ENCODE measurements at regions of chr3 and their contacts with region 1.

Region 1: DNA sequence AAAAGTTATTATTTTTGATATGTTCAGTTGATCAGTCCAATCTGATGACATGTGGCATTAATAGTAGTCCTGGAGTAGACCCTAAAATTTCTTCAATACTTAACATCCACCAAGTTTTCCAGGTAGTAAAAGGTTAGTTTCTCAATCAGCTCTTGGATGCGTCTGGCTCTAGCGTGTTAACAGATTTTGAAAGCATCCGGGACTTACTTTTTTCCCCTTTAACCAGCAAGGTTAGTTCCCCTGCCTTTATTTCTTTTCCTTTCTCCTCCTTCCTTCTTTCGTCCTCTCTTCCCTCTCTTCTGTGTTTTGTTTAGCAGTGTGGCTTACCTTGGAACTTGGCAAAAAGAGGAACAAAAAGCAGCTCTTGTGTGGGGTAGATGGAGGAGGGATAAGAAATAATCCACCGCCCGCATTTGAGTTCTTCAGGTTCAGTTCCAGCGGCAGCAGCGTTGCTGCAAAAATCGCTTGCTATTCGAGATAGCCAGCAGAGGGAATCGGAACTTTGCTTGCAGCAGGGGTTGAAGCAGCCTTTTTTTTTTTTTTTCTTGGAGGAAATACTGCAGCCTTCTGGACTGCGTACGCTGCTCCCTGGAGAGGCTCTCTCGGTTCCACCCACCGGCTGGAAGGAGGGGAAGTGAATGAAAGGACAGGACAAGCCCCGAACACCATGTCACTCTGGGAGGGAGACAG is at the start of gene RBMS3:
- DNase-seq: peak; percentile 91
- ATAC-seq: peak; percentile 83
- H3K4me3 ChIP-seq: peak within 1 kb of the TSS; percentile 71
- H3K27ac ChIP-seq: peak within 1 kb of the TSS; percentile 69
- H3K4me1 ChIP-seq: peaks cover 23% of the 10 kb centered on the region
- H3K27me3 ChIP-seq: no peaks in the 10 kb centered on the region
- CTCF ChIP-seq: peak; percentile 58
- total RNA-seq, gene RBMS3: 5.4 and 13.5 TPM in 2 replicates

Region 2: GRCh38 chr3:28651159-28651558 is 629.4 kb before region 1 on chr3:
- CTCF ChIA-PET with region 1: no interaction called
- POLR2A ChIA-PET with region 1: no interaction called
- intact Hi-C with region 1: no loop called
- DNase-seq: no peak
- ATAC-seq: no peak
- H3K4me3 ChIP-seq: no peak overlapping the region
- H3K27ac ChIP-seq: no peak overlapping the region
- H3K4me1 ChIP-seq: no peaks in the 10 kb centered on the region
- H3K27me3 ChIP-seq: peaks cover 16% of the 10 kb centered on the region; the same call in 1 of the 2 replicates
- CTCF ChIP-seq: no peak

Region 3: DNA sequence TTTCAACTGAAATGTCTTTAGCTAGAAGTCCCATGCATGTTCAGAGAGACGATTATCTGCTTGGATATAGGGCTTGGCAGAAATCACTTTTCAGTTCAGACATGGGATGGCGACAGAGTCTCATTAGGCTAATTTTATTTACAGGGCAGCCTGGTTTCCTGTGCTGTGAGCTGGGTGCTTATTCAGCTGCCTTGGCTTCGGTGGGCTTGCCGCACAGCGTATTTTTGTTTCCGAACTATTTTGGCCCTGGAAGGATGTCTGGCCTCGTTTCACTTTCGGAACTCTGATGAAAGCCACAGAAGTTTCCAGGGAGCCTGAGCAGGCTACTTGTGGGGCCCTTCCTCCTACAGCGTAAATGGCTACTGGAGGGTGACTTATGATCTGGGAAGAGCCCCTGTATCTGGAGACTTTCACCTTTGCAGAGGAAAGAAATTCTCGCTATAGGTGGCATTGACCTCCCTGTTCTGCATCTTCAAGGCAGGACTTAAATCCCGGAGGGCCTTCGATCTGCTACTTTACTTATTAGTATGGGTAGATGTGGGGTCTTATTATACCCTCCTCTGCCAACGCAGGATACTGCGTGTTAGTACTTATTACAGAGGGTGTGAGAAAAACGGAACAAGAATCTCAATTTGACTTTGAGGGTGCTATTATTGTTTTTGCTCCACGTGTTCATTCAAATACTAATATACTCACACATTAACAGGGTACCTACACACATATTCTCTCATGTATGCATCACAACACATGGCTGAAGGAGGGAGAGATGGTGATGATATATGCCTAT is 363.6 kb before region 1 on chr3:
- CTCF ChIA-PET with region 1: interaction called, 9 read pairs
- POLR2A ChIA-PET with region 1: no interaction called
- intact Hi-C with region 1: loop called (anchors 1 kb)
- DNase-seq: peak; percentile 47
- ATAC-seq: peak; percentile 75
- H3K4me3 ChIP-seq: no peak overlapping the region
- H3K27ac ChIP-seq: no peak overlapping the region
- H3K4me1 ChIP-seq: 0 out of 2 replicates have a peak, but pooled peaks cover 4% of the 10 kb centered on the region
- H3K27me3 ChIP-seq: no peaks in the 10 kb centered on the region
- CTCF ChIP-seq: peak; percentile 29; the same call in 1 of the 2 replicates

Region 4: GRCh38 chr3:29144807-29145206 is 135.7 kb before region 1 on chr3:
- CTCF ChIA-PET with region 1: no interaction called
- POLR2A ChIA-PET with region 1: no interaction called
- intact Hi-C with region 1: loop called (anchors 2 kb)
- DNase-seq: peak; percentile 49
- ATAC-seq: peak; percentile 53; the same call in 1 of the 2 replicates
- H3K4me3 ChIP-seq: no peak overlapping the region
- H3K27ac ChIP-seq: no peak overlapping the region
- H3K4me1 ChIP-seq: no peaks in the 10 kb centered on the region
- H3K27me3 ChIP-seq: no peaks in the 10 kb centered on the region
- CTCF ChIP-seq: peak; percentile 31; the same call in 1 of the 2 replicates

Region 5: DNA sequence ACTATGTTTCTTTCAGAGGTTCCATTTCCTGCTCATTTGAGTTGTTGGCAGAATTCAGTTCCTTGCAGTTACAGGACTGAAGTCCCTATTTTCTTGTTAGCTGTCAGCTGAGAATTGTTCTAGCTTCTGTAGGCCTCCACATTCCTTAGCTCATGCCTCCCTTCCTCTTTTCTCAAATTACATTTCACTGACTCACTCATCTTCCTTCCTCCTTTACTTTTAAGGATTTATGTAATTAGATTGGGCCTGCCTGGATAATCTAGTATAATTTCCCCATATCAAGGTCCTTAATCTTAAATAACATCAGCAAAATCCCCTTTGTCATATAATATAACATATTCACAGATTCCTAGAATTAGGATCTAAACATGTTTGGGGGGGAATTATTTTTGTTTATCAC is 40.3 kb before region 1 on chr3:
- CTCF ChIA-PET with region 1: no interaction called
- POLR2A ChIA-PET with region 1: interaction called, 12 read pairs
- intact Hi-C with region 1: no loop called
- DNase-seq: peak; percentile 77
- ATAC-seq: peak; percentile 98
- H3K4me3 ChIP-seq: no peak overlapping the region
- H3K27ac ChIP-seq: no peak overlapping the region
- H3K4me1 ChIP-seq: peaks cover 19% of the 10 kb centered on the region
- H3K27me3 ChIP-seq: no peaks in the 10 kb centered on the region
- CTCF ChIP-seq: no peak

Region 6: GRCh38 chr3:29440413-29441305 is 160.1 kb after region 1 on chr3:
- CTCF ChIA-PET with region 1: no interaction called
- POLR2A ChIA-PET with region 1: no interaction called
- intact Hi-C with region 1: loop called (anchors 5 kb)
- DNase-seq: peak; percentile 31
- ATAC-seq: peak; percentile 77
- H3K4me3 ChIP-seq: peak overlapping the region; percentile 49
- H3K27ac ChIP-seq: no peak overlapping the region
- H3K4me1 ChIP-seq: peaks cover 30% of the 10 kb centered on the region
- H3K27me3 ChIP-seq: no peaks in the 10 kb centered on the region
- CTCF ChIP-seq: no peak

Region 7: DNA sequence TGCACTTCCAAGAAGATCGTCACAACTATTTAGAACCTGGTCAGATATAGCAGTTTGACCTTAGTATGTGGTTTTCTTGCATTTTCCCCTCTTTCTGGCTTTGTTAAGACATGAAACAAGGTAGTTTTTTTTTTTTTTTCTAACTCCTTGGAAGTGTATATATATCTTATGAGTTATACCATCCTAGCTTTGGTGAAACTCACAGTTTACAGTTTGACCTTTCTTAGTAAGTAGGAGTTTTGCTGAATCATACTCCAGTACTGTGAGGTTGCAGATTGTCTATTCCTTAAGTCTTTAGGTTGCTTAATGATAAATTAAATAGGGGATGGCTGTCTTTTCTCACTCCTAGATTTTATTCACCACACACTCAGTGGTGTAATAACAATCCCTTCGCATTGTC is 325.3 kb after region 1 on chr3:
- CTCF ChIA-PET with region 1: no interaction called
- POLR2A ChIA-PET with region 1: no interaction called
- intact Hi-C with region 1: loop called (anchors 1 kb)
- DNase-seq: peak; percentile 18
- ATAC-seq: no peak
- H3K4me3 ChIP-seq: no peak overlapping the region
- H3K27ac ChIP-seq: no peak overlapping the region
- H3K4me1 ChIP-seq: peaks cover 23% of the 10 kb centered on the region
- H3K27me3 ChIP-seq: no peaks in the 10 kb centered on the region
- CTCF ChIP-seq: no peak

Measured in PC-3 (cell line).